ENCODE measurements at regions of chr4 and their contacts with region 1.

Region 1: DNA sequence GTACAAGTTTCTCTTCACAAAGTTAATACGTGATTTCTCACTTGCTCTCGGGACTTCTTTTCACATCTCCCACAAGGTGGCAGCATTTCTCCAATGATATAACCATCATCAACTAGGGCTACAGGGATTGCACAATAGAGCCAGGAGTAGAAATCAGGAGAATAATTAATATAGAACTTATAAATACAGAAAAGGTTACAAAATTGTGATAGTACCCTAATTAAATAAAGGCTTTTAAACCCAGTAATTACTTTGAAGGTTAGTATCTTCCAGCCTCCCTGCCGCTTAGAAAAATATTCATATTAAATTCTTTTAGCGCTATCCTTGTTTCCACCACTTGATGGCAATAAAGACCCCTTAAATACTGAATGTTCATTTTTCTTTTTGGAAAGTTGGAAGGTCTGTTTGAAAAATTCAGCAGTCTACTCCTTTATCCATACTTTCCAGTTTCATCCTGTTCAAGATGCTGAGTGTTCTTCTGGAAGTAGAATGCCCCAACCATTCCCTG is 65.8 kb downstream of the RASGEF1B start:
- DNase-seq: peak; percentile 85
- ATAC-seq: peak; percentile 85
- H3K4me3 ChIP-seq: peak overlapping the region in 1 of 5 experiments; percentile 12
- H3K4me3 Mint-ChIP-seq: no peak overlapping the region
- H3K27ac ChIP-seq: no peak overlapping the region
- H3K27ac Mint-ChIP-seq: no peak overlapping the region
- H3K4me1 ChIP-seq: no peaks in the 10 kb centered on the region
- H3K4me1 Mint-ChIP-seq: peaks cover 3% of the 10 kb centered on the region
- H3K27me3 ChIP-seq: no peaks in the 10 kb centered on the region
- H3K27me3 Mint-ChIP-seq: no peaks in the 10 kb centered on the region
- CTCF ChIP-seq: peak; percentile 99

Region 2: GRCh38 chr4:81421346-81422218 is 15.6 kb after region 1 on chr4:
- CTCF ChIA-PET with region 1: interaction called, 8 read pairs
- POLR2A ChIA-PET with region 1: no interaction called
- intact Hi-C with region 1: loop called (anchors 1 kb)
- DNase-seq: peak; percentile 83
- ATAC-seq: peak; percentile 98
- H3K4me3 ChIP-seq: no peak overlapping the region
- H3K4me3 Mint-ChIP-seq: peak overlapping the region; percentile 59
- H3K27ac ChIP-seq: peak overlapping the region; percentile 51 to 73
- H3K27ac Mint-ChIP-seq: peak overlapping the region; percentile 95
- H3K4me1 ChIP-seq: peaks cover 12 to 24% of the 10 kb centered on the region in 2 donors
- H3K4me1 Mint-ChIP-seq: peaks cover 42% of the 10 kb centered on the region
- H3K27me3 ChIP-seq: no peaks in the 10 kb centered on the region
- H3K27me3 Mint-ChIP-seq: no peaks in the 10 kb centered on the region
- CTCF ChIP-seq: no peak

Region 3: GRCh38 chr4:82201805-82202641 is 796.1 kb after region 1 on chr4:
- CTCF ChIA-PET with region 1: interaction called, 13 read pairs
- POLR2A ChIA-PET with region 1: no interaction called
- intact Hi-C with region 1: no loop called
- DNase-seq: peak; percentile 69
- ATAC-seq: peak; percentile 43
- H3K4me3 ChIP-seq: no peak overlapping the region
- H3K4me3 Mint-ChIP-seq: no peak overlapping the region
- H3K27ac ChIP-seq: no peak overlapping the region
- H3K27ac Mint-ChIP-seq: no peak overlapping the region
- H3K4me1 ChIP-seq: no peaks in the 10 kb centered on the region
- H3K4me1 Mint-ChIP-seq: no peaks in the 10 kb centered on the region
- H3K27me3 ChIP-seq: no peaks in the 10 kb centered on the region
- H3K27me3 Mint-ChIP-seq: peaks cover 16% of the 10 kb centered on the region
- CTCF ChIP-seq: peak; percentile 85

Region 4: GRCh38 chr4:82268050-82268825 is 862.3 kb after region 1 on chr4:
- CTCF ChIA-PET with region 1: interaction called, 14 read pairs
- POLR2A ChIA-PET with region 1: no interaction called
- intact Hi-C with region 1: loop called (anchors 1 kb)
- DNase-seq: peak; percentile 65
- ATAC-seq: peak; percentile 88
- H3K4me3 ChIP-seq: no peak overlapping the region
- H3K4me3 Mint-ChIP-seq: no peak overlapping the region
- H3K27ac ChIP-seq: no peak overlapping the region
- H3K27ac Mint-ChIP-seq: no peak overlapping the region
- H3K4me1 ChIP-seq: peaks cover 29 to 34% of the 10 kb centered on the region in 2 donors
- H3K4me1 Mint-ChIP-seq: peaks cover 34% of the 10 kb centered on the region
- H3K27me3 ChIP-seq: no peaks in the 10 kb centered on the region
- H3K27me3 Mint-ChIP-seq: peaks cover 4% of the 10 kb centered on the region
- CTCF ChIP-seq: peak; percentile 74

Region 5: DNA sequence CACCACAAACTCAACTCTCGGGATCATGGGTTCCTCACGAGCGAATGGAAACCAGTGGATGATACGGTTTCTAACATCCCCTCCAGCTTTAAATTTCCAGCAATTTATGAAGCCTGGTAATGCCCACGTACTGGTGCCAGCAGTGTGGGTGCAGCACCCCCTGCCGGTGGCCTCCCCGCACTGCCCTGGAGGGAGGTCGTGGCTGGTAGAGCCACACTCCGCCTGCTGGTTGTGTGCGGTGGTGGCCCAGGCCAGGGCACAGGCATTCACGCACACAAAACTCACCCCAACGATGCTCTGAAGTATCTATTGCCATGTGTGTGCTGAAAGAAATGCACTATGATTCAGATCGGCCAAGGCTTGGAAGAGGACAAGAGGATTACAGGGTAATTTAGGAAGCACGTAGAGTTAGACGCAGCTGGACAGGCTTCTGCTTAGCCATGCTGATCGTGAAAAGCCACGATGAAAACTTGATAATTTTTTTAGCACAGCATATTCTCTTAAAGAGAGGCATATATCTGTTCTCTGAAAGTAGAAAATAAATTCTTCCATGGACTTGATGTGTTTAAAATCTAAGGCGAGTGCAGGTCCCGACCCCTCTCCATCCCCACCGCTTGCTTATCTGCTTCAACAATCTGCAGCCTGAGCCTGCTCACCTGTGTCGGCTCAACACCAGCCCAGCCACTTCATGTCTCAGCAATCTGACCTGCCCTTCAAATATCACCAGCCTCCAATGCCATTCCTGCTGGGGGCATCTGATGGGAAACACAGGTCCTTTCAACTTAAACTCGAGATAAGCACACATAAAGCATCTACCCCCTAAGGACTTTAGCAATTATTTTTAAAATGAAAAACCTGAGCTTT is 1333.6 kb after region 1 on chr4:
- CTCF ChIA-PET with region 1: no interaction called
- POLR2A ChIA-PET with region 1: no interaction called
- intact Hi-C with region 1: loop called (anchors 5 kb)
- DNase-seq: peak; percentile 33
- ATAC-seq: no peak
- H3K4me3 ChIP-seq: no peak overlapping the region
- H3K4me3 Mint-ChIP-seq: no peak overlapping the region
- H3K27ac ChIP-seq: no peak overlapping the region
- H3K27ac Mint-ChIP-seq: no peak overlapping the region
- H3K4me1 ChIP-seq: no peaks in the 10 kb centered on the region
- H3K4me1 Mint-ChIP-seq: no peaks in the 10 kb centered on the region
- H3K27me3 ChIP-seq: no peaks in the 10 kb centered on the region
- H3K27me3 Mint-ChIP-seq: peaks cover 6% of the 10 kb centered on the region
- CTCF ChIP-seq: peak; percentile 47

Measured in B cell (primary cell).